Pancreas (tissue), 10 donors: ENCODE measurements at regions of chr18 and their contacts with region 1.

Region 1: GRCh38 chr18:10213526-10213925 is 240.9 kb upstream of the APCDD1 start:
- DNase-seq: no peak
- ATAC-seq: peak; percentile 56 to 81 (median 70)
- H3K4me3 ChIP-seq: no peak overlapping the region
- H3K27ac ChIP-seq: no peak overlapping the region
- H3K4me1 ChIP-seq: peaks cover 0 to 9% (median 5%) of the 10 kb centered on the region in 3 donors
- H3K27me3 ChIP-seq: no peaks in the 10 kb centered on the region
- CTCF ChIP-seq: no peak

Region 2: DNA sequence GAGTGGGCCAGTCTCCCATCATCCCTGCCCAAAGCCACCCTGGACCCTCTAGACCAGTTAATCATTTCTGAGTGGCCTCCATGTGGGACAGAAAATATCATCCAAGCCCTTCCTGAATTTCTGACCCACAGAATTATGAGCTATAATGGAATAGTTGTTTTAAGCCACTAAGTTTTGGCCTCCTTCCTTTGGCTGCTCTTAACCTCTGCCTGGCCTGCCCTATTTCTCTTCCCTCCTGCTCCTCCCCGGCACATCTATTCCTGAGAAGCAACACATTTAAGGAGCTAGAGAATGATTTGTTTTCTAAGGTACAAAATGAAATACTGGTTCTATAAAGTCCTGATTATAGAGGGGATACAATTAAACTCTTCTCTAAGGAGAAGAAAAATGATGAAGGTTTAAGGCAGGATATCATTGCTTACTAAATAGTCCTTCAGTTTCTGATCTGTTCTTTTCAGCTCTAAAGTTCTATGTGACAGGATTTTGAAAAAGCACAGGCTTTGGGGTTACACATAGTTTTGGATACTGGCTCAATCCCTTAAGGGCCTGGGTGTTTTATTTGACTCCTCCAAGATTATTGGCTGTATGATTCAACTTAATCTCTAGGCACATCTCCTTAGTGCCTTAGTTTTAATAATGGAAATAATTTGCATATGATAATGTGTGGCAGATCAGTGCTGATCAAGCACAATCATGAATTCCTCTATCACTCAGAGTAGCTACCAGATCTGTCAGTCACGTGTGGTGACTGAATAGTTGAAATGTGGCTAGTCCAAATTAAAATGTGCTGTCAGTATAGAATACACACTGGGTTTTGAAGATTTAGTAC is 59.4 kb before region 1 on chr18:
- intact Hi-C with region 1: loop called in 1 of 3 experiments (anchors 10 kb)
- DNase-seq: no peak
- ATAC-seq: no peak
- H3K4me3 ChIP-seq: no peak overlapping the region
- H3K27ac ChIP-seq: no peak overlapping the region
- H3K4me1 ChIP-seq: no peaks in the 10 kb centered on the region
- H3K27me3 ChIP-seq: no peaks in the 10 kb centered on the region
- CTCF ChIP-seq: no peak